Naive thymus-derived CD4-positive, alpha-beta T cell (primary cell): ENCODE measurements at regions of chr6 and their contacts with region 1.

Region 1: DNA sequence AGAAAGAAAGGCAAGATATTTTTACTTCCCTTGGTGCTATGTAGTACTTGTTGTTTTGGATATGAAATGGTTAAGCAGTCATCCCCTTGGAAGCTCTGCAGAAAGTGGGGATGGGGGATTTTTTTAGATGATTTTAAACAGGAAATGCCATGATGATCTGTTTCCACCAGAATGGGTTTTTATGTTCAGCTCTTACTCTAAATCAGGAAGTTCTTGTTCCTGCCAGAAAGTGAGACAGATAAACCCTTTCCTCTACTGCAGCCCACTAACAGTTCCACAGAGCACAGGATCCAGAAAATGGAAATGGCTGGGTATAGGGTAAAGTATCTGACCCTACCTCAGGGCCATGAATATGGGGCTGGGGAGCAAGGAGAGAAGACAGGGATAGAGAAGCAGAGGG is 32.1 kb upstream of the PPP1R3G start:
- DNase-seq: no peak
- ATAC-seq: no peak
- H3K4me3 ChIP-seq: no peak overlapping the region
- H3K4me3 Mint-ChIP-seq: no peak overlapping the region
- H3K27ac ChIP-seq: no peak overlapping the region
- H3K27ac Mint-ChIP-seq: no peak overlapping the region
- H3K4me1 ChIP-seq: no peaks in the 10 kb centered on the region
- H3K4me1 Mint-ChIP-seq: peaks cover 0 to 4% (median 0%) of the 10 kb centered on the region in 7 donors
- H3K27me3 ChIP-seq: no peaks in the 10 kb centered on the region
- H3K27me3 Mint-ChIP-seq: peaks cover 0 to 4% (median 0%) of the 10 kb centered on the region in 5 donors

Region 2: DNA sequence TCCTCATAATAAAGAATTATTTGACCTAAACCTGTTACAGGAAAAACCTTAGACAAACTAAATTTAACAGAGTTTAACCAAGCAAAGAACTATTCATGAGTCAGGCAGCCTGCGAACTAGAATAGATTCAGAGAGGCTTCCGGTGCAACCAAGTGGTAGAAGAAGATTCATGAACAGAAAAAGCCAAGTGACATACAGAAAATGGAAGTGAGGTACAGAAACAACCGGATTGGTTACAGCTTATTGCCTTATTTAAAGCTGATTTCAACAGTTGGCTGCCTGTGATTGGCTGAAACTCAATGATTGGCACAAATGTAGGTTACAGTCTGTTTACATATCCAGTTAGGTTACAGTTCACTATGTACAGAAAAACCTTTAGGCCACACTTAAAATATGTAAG is 42.2 kb after region 1 on chr6:
- CTCF ChIA-PET with region 1: no interaction called
- POLR2A ChIA-PET with region 1: no interaction called
- intact Hi-C with region 1: no loop called
- DNase-seq: no peak
- ATAC-seq: no peak
- H3K4me3 ChIP-seq: no peak overlapping the region
- H3K4me3 Mint-ChIP-seq: no peak overlapping the region
- H3K27ac ChIP-seq: no peak overlapping the region
- H3K27ac Mint-ChIP-seq: no peak overlapping the region
- H3K4me1 ChIP-seq: no peaks in the 10 kb centered on the region
- H3K4me1 Mint-ChIP-seq: peaks cover 0 to 18% (median 14%) of the 10 kb centered on the region in 7 donors
- H3K27me3 ChIP-seq: no peaks in the 10 kb centered on the region
- H3K27me3 Mint-ChIP-seq: peaks cover 19 to 26% (median 22%) of the 10 kb centered on the region in 5 donors

Region 3: GRCh38 chr6:5365436-5366195 is 312.6 kb after region 1 on chr6:
- CTCF ChIA-PET with region 1: no interaction called
- POLR2A ChIA-PET with region 1: no interaction called
- intact Hi-C with region 1: no loop called
- DNase-seq: no peak
- ATAC-seq: no peak
- H3K4me3 ChIP-seq: no peak overlapping the region
- H3K4me3 Mint-ChIP-seq: no peak overlapping the region
- H3K27ac ChIP-seq: no peak overlapping the region
- H3K27ac Mint-ChIP-seq: peak overlapping the region in 1 of 9 donors; percentile 51
- H3K4me1 ChIP-seq: no peaks in the 10 kb centered on the region
- H3K4me1 Mint-ChIP-seq: peaks cover 0 to 35% (median 27%) of the 10 kb centered on the region in 7 donors
- H3K27me3 ChIP-seq: no peaks in the 10 kb centered on the region
- H3K27me3 Mint-ChIP-seq: no peaks in the 10 kb centered on the region

Region 4: DNA sequence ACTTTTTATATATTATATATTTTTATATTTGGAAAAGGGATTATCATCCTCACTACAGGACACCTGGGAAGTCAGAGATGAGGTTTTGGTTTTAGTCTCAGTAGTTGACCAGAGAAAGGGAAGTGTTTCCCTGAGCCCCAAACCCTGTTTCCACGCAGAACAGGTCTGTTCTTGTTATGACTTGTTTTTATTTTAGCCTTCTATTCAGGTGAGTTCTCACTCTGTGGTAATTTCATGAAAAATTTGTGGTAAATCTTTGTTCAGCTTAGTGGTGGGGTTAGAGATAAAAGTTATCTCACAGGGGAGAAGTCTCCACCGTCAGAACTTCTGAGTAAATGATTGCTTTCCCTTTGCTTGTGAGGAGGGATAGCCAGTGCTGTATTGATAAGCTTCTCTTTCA is 433.2 kb after region 1 on chr6:
- CTCF ChIA-PET with region 1: interaction called, 12 read pairs
- POLR2A ChIA-PET with region 1: no interaction called
- intact Hi-C with region 1: no loop called
- DNase-seq: no peak
- ATAC-seq: no peak
- H3K4me3 ChIP-seq: no peak overlapping the region
- H3K4me3 Mint-ChIP-seq: no peak overlapping the region
- H3K27ac ChIP-seq: no peak overlapping the region
- H3K27ac Mint-ChIP-seq: peak overlapping the region in 2 of 9 donors; percentile 20 to 45
- H3K4me1 ChIP-seq: no peaks in the 10 kb centered on the region
- H3K4me1 Mint-ChIP-seq: peaks cover 0 to 13% (median 5%) of the 10 kb centered on the region in 7 donors
- H3K27me3 ChIP-seq: no peaks in the 10 kb centered on the region
- H3K27me3 Mint-ChIP-seq: no peaks in the 10 kb centered on the region